Naive thymus-derived CD4-positive, alpha-beta T cell (primary cell): ENCODE measurements at regions of chr1 and their contacts with region 1.

Region 1: GRCh38 chr1:154791292-154792166 is 78.6 kb downstream of the KCNN3 start:
- DNase-seq: peak; percentile 46 to 94 (median 91)
- ATAC-seq: peak; percentile 99
- H3K4me3 ChIP-seq: peak overlapping the region; percentile 6
- H3K4me3 Mint-ChIP-seq: peak overlapping the region; percentile 63 to 83 (median 78)
- H3K27ac ChIP-seq: peak overlapping the region; percentile 38
- H3K27ac Mint-ChIP-seq: peak overlapping the region; percentile 59 to 95 (median 84)
- H3K4me1 ChIP-seq: peaks cover 22 to 23% of the 10 kb centered on the region in 2 donors
- H3K4me1 Mint-ChIP-seq: peaks cover 18 to 56% (median 40%) of the 10 kb centered on the region in 7 donors
- H3K27me3 ChIP-seq: no peaks in the 10 kb centered on the region
- H3K27me3 Mint-ChIP-seq: peaks cover 0 to 23% (median 0%) of the 10 kb centered on the region in 5 donors

Region 2: DNA sequence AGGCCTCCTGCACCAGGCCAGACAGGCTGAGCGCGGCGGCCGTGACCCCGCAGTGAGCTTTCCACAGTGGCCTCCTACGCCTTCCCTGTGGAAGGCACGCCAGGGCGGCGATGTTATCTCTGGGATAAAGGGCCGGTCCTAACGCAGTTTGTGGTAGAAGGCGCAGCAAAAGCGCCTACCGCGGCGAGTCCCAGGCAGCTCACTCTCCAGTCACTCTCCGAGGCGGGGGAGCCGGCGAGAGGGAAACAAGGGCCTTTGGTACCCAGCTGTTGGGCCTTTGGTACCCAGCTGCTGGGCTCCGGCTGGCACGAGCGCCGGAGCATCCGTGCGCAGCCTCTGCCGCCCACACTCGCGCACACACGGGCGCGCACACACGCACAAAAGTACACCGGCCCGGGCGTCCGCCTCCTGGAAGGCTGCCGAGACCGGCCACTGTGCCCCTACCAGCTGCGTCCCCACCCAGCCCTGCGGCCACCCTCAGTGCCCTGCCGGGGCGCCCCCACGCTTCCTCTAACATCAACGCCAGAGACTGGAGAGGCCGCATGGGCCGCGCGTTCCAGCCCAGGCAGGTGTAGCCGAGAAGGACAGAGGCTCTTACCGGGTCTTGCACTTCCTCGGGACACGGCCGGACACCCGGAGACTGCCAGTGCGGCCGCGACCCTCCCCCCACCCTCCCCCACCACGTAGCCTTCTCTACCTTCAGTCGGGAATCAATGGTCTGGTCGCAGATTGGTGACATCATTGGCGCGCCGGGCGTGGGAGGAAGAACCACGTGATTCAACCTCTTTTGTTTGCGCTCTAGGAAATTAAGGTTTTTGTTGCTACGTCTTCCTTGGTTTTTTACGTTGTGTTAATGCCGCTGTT is 164.0 kb before region 1 on chr1:
- CTCF ChIA-PET with region 1: no interaction called
- POLR2A ChIA-PET with region 1: interaction called, 3 read pairs
- intact Hi-C with region 1: loop called in 1 of 2 experiments (anchors 1 kb)
- DNase-seq: peak; percentile 78 to 92 (median 90)
- ATAC-seq: peak; percentile 81
- H3K4me3 ChIP-seq: peak overlapping the region; percentile 72
- H3K4me3 Mint-ChIP-seq: peak overlapping the region; percentile 85 to 100 (median 94)
- H3K27ac ChIP-seq: peak overlapping the region; percentile 99
- H3K27ac Mint-ChIP-seq: peak overlapping the region; percentile 98 to 100 (median 99)
- H3K4me1 ChIP-seq: peaks cover 15% of the 10 kb centered on the region in 2 donors
- H3K4me1 Mint-ChIP-seq: peaks cover 20 to 54% (median 44%) of the 10 kb centered on the region in 7 donors
- H3K27me3 ChIP-seq: no peaks in the 10 kb centered on the region
- H3K27me3 Mint-ChIP-seq: peaks cover 0 to 20% (median 7%) of the 10 kb centered on the region in 5 donors

Region 3: GRCh38 chr1:154736841-154737240 is 54.7 kb before region 1 on chr1:
- CTCF ChIA-PET with region 1: no interaction called
- POLR2A ChIA-PET with region 1: no interaction called
- intact Hi-C with region 1: no loop called
- DNase-seq: peak in 1 of 9 donors; percentile 64
- ATAC-seq: peak; percentile 70
- H3K4me3 ChIP-seq: no peak overlapping the region
- H3K4me3 Mint-ChIP-seq: peak overlapping the region in 1 of 10 donors; percentile 60
- H3K27ac ChIP-seq: no peak overlapping the region
- H3K27ac Mint-ChIP-seq: peak overlapping the region in 2 of 9 donors; percentile 27 to 82
- H3K4me1 ChIP-seq: no peaks in the 10 kb centered on the region
- H3K4me1 Mint-ChIP-seq: peaks cover 0 to 50% (median 2%) of the 10 kb centered on the region in 7 donors
- H3K27me3 ChIP-seq: no peaks in the 10 kb centered on the region
- H3K27me3 Mint-ChIP-seq: peaks cover 0 to 34% (median 5%) of the 10 kb centered on the region in 5 donors

Region 4: DNA sequence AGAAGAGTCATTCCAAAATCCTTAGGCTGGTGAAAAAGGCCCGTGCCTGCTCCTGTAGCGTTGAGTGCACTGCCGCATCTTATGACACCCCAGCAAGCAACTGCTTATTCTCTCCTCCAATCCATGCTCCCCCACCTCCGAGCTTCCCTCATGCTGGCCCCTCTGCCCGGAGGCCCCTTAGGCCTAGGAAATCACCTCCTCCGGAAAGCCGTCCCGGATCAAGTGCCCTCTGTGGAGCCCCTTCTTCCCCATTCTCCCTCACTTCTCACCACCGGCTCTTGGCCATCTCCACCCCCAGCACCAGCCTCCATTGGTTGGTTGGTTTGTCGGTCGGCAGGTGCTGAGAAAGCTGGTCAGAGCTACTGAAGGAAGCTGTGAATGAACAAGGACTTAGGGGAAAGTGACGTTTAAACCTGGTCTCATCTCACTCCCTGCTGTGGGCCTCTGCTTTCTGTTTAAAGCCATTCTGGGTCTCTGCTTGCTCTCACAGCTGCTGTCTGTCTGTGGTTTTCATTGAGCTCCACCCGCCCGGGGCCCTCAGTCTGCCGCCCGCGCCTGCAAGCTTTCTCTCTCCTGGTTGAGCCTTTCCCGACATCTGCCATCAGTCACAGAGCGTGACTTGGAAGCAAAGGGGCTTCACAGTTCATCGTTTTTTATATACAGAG is 43.7 kb before region 1 on chr1:
- CTCF ChIA-PET with region 1: interaction called, 12 read pairs
- POLR2A ChIA-PET with region 1: interaction called, 6 read pairs
- intact Hi-C with region 1: loop called (anchors 1 to 5 kb)
- DNase-seq: peak in 8 of 9 donors; percentile 51 to 64 (median 56)
- ATAC-seq: peak; percentile 82
- H3K4me3 ChIP-seq: peak overlapping the region; percentile 46
- H3K4me3 Mint-ChIP-seq: peak overlapping the region; percentile 71 to 88 (median 84)
- H3K27ac ChIP-seq: peak overlapping the region; percentile 73
- H3K27ac Mint-ChIP-seq: peak overlapping the region; percentile 90 to 98 (median 96)
- H3K4me1 ChIP-seq: peaks cover 39 to 47% of the 10 kb centered on the region in 2 donors
- H3K4me1 Mint-ChIP-seq: peaks cover 46 to 70% (median 51%) of the 10 kb centered on the region in 7 donors
- H3K27me3 ChIP-seq: no peaks in the 10 kb centered on the region
- H3K27me3 Mint-ChIP-seq: peaks cover 0 to 24% (median 0%) of the 10 kb centered on the region in 5 donors

Region 5: DNA sequence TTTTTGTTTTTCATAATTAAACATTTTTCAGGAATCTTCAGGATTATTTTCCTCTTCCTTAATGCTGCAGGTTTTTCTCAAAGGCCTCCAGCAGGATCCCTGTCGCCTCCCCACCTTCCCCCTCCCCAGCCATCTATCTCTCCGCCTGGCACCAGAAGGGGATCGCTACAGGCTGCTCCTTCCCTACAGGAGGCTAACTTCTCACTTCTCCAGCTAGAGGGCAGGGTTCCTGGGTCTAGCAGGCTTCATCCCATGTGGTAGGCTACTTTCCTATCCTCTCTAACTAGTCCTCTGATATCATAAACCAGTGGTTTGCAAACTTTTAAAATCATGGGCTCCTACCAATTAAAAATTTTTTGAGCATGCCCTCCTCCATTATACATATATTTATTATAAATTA is 25.6 kb before region 1 on chr1:
- CTCF ChIA-PET with region 1: interaction called, 27 read pairs
- POLR2A ChIA-PET with region 1: interaction called, 6 read pairs
- intact Hi-C with region 1: loop called in 1 of 2 experiments (anchors 1 kb)
- DNase-seq: peak in 3 of 9 donors; percentile 29 to 41 (median 34)
- ATAC-seq: peak; percentile 61
- H3K4me3 ChIP-seq: no peak overlapping the region
- H3K4me3 Mint-ChIP-seq: no peak overlapping the region
- H3K27ac ChIP-seq: no peak overlapping the region
- H3K27ac Mint-ChIP-seq: peak overlapping the region in 1 of 9 donors; percentile 51
- H3K4me1 ChIP-seq: no peaks in the 10 kb centered on the region
- H3K4me1 Mint-ChIP-seq: peaks cover 0 to 4% (median 2%) of the 10 kb centered on the region in 7 donors
- H3K27me3 ChIP-seq: peaks cover 0 to 8% of the 10 kb centered on the region in 2 donors
- H3K27me3 Mint-ChIP-seq: peaks cover 0 to 18% (median 5%) of the 10 kb centered on the region in 5 donors

Region 6: DNA sequence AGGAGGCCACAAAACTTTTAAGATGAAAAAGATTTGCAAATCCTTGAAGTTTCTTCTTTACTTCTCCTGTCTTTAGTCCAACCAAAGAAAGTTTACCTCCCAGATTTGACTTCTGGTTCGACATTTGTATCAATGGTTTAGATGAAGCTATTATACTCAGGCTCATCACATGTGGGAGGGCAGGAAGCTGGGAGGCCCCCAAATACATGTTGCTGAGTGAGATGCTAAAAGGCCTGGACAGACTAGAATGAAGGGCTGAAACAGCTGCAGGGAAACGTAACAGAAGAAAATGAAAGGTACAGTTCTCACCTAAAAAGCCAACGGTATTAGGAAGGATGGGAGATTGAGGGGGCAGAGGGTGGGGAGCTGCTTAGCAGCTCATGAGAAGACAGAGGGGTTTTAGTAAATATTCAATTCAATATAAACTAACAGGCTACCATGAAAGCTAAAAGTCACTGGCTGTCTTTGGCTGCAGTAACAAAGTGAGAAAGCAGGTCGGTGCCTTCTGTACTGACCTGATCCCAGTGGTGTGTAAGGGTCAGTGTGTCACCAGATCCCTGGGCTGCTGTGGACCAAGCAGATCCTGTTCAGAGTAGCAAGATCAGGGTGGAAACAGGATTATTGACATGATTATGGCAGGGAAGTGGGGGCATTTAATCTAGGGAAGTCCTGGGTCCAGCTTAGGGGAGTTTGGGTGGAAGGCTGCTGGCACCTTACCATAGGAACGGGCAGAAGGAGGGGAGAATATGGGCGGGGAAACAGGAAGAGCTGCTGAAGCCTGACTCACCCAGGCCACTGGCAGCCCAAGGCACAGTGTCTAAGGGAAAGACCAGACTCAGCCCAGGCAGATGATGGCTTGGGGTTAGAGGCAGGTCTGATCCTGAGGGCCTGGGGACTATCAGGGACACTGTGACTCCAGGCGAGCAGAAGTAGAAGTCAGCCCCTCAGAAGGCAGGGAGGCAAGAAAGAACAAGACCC is 18.2 kb after region 1 on chr1:
- CTCF ChIA-PET with region 1: no interaction called
- POLR2A ChIA-PET with region 1: interaction called, 3 read pairs
- intact Hi-C with region 1: loop called in 1 of 2 experiments (anchors 1 kb)
- DNase-seq: no peak
- ATAC-seq: peak; percentile 51
- H3K4me3 ChIP-seq: no peak overlapping the region
- H3K4me3 Mint-ChIP-seq: no peak overlapping the region
- H3K27ac ChIP-seq: no peak overlapping the region
- H3K27ac Mint-ChIP-seq: peak overlapping the region in 4 of 9 donors; percentile 1 to 78 (median 50)
- H3K4me1 ChIP-seq: no peaks in the 10 kb centered on the region
- H3K4me1 Mint-ChIP-seq: peaks cover 0 to 12% (median 5%) of the 10 kb centered on the region in 7 donors
- H3K27me3 ChIP-seq: peaks cover 0 to 2% of the 10 kb centered on the region in 2 donors
- H3K27me3 Mint-ChIP-seq: peaks cover 0 to 23% (median 9%) of the 10 kb centered on the region in 5 donors

Region 7: GRCh38 chr1:154896771-154897391 is 105.4 kb after region 1 on chr1:
- CTCF ChIA-PET with region 1: no interaction called
- POLR2A ChIA-PET with region 1: no interaction called
- intact Hi-C with region 1: no loop called
- DNase-seq: no peak
- ATAC-seq: no peak
- H3K4me3 ChIP-seq: no peak overlapping the region
- H3K4me3 Mint-ChIP-seq: no peak overlapping the region
- H3K27ac ChIP-seq: no peak overlapping the region
- H3K27ac Mint-ChIP-seq: no peak overlapping the region
- H3K4me1 ChIP-seq: no peaks in the 10 kb centered on the region
- H3K4me1 Mint-ChIP-seq: peaks cover 0 to 5% (median 0%) of the 10 kb centered on the region in 7 donors
- H3K27me3 ChIP-seq: no peaks in the 10 kb centered on the region
- H3K27me3 Mint-ChIP-seq: peaks cover 0 to 22% (median 3%) of the 10 kb centered on the region in 5 donors